ENCODE measurements at regions of chr18 and their contacts with region 1.

Region 1: DNA sequence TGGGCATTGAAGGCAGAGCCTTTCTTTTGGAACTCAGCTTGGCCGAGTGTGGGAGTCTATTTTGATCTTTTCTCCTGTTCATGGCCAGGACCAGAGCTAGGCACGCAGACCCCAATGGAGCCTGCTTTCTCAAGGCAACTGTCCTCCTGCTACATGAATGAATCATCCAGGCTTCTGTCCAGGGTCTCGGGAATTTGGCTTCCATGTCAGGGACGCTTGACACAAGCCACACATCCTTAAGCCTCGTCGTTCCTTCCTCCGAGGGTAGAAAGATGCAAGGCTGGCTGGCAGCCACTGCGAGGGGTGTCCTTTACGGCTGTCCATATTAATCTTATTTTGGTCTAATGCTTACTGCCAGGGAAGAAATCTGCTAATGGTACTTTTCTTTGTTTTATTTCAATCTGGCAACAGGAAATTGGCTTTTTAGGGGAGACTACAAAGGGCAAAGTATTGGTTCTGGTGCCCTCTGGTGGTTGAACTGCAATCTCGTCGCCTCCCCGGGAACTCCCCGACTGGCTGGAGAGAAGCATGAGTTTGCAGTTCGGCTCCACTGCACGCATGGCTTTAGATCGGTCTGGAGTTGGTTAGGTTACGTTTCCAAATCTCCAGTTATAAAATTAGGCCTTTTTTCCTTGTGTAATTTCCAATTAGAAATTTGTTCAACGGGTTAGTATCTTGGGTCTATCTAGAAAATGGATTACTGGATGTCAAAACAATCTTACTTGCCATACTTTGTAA is 135.2 kb downstream of the ALPK2 start:
- DNase-seq: peak; percentile 89
- H3K4me3 ChIP-seq: peak overlapping the region in 3 of 4 donors; percentile 13 to 29 (median 25)
- H3K27ac ChIP-seq: peak overlapping the region; percentile 31 to 74 (median 70)
- H3K4me1 ChIP-seq: peaks cover 0 to 29% (median 20%) of the 10 kb centered on the region in 4 donors
- H3K27me3 ChIP-seq: no peaks in the 10 kb centered on the region
- CTCF ChIP-seq: peak; percentile 71 to 83 (median 78)
- EP300 ChIP-seq: no peak
- POLR2A ChIP-seq: no peak

Region 2: DNA sequence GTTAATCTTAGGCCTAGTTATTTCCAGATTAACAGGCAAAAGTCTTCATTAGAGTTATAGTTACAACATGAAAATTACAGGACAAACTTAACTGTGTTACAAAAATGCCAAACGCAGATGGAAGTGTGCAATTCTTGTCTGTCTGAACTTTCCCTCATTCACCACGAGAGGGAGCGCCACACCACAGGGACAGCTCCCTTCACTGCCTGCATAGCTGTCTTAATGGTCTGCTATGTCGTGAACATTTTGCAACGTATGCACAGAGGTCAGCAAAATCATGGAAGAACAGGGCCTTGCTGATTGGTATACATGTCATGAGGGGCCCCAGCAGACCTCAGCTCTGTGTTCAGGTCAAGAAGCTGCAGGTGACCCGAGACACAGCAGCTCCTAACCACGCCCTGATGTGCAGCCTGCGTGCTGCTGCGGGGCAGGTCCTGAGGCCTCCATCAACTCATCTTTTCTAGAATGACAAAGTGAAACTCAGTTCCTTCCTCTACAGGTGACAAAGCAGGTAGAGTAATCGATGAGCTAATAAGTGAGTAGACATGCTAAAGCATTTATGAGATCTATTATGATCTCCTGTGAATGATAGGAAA is 611.8 kb before region 1 on chr18:
- intact Hi-C with region 1: loop called (anchors 5 kb)
- DNase-seq: peak; percentile 83
- H3K4me3 ChIP-seq: no peak overlapping the region
- H3K27ac ChIP-seq: no peak overlapping the region
- H3K4me1 ChIP-seq: no peaks in the 10 kb centered on the region
- H3K27me3 ChIP-seq: no peaks in the 10 kb centered on the region
- CTCF ChIP-seq: peak; percentile 75 to 88 (median 84)
- EP300 ChIP-seq: no peak
- POLR2A ChIP-seq: no peak

Region 3: DNA sequence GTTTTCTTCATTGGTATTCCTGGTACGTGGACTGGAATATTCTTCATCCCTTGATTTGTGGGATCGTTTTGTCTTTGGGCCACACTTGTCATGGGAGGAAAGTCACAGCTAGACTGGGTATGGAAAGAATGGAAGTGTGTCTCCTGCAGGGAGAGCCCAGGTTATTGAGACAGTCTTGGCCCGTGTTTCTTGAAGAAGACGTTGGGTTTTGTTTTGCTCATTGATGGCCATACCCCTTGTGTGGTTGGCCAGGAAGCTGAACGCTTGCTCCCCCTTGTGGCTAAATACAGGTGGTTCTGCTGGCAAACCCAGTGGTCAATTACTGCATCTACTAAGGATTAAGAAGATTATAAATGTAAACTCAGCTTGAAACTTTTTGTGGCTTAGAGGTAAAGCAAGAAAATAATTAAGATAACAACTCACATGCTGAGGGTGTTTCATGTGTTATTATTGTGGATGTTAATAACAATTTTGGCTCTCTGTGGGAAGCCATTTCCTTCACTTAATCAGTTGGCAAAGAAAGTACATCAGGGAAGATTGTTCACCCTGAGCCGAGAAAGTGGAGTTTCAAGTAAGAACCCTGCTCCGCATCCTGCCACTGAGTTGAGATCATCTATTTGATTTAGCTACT is 357.9 kb before region 1 on chr18:
- intact Hi-C with region 1: loop called (anchors 10 kb)
- DNase-seq: no peak
- H3K4me3 ChIP-seq: no peak overlapping the region
- H3K27ac ChIP-seq: no peak overlapping the region
- H3K4me1 ChIP-seq: peaks cover 0 to 4% (median 0%) of the 10 kb centered on the region in 4 donors
- H3K27me3 ChIP-seq: no peaks in the 10 kb centered on the region
- CTCF ChIP-seq: peak; percentile 38 to 79 (median 64)
- EP300 ChIP-seq: no peak
- POLR2A ChIP-seq: no peak

Region 4: DNA sequence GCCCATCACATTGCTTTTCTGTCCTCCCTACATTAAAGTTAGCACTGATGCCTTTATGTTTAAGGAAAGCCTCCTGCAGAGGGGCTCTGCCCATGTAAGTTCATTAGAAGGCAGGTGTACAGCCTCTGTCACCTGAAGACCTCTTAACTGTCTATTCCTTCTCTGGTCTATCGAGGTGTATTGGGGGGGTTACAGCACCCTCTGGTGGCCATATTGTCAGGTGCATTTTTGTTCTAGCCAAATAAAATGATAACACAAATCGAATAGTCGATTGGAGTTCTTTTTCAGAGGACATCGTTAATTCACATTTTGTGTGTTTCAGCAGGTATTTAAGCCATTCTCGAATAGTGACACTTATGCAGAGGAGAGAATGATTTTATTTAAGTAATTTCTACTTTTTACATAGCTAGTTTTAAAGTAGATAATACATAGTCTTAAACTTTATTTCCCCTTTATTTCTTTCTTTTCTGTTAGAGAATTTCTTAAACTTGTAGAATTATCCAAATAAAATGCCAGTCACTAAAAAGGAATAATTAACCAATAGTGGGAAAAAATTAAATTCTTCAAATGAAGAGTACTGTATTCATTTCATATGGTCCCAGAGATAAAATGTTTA is 312.8 kb before region 1 on chr18:
- intact Hi-C with region 1: loop called (anchors 5 kb)
- DNase-seq: no peak
- H3K4me3 ChIP-seq: no peak overlapping the region
- H3K27ac ChIP-seq: no peak overlapping the region
- H3K4me1 ChIP-seq: peaks cover 0 to 56% (median 39%) of the 10 kb centered on the region in 4 donors
- H3K27me3 ChIP-seq: no peaks in the 10 kb centered on the region
- CTCF ChIP-seq: peak; percentile 65 to 87 (median 76)
- EP300 ChIP-seq: no peak
- POLR2A ChIP-seq: no peak

Region 5: DNA sequence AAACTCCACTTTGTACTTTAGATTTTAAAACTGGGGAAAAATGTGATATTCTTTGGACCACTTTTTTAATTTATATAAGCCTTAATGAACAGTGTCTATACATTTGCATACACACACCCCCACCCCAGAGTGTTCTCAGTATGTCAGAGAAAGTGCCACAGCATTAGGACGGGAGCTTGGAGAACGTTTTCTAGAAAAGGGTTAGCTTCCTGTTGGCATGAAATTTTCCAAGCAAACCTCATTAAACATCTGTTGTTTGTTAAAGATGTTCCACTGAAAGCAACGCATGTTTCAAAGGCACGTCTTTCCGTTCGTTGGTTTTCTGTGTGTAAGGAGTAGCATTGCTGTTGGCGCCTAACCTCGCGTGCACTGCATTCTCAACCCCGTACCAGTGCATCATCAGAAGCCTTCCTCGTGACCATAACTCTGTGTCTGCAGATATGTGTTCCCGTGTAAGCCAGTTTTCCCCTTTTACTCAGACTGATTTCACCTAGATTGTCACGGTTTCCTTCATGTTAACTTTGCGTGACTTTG is 93.3 kb before region 1 on chr18:
- intact Hi-C with region 1: loop called (anchors 1 kb)
- DNase-seq: no peak
- H3K4me3 ChIP-seq: no peak overlapping the region
- H3K27ac ChIP-seq: peak overlapping the region in 1 of 4 donors; percentile 17
- H3K4me1 ChIP-seq: peaks cover 0 to 37% (median 17%) of the 10 kb centered on the region in 4 donors
- H3K27me3 ChIP-seq: no peaks in the 10 kb centered on the region
- CTCF ChIP-seq: no peak
- EP300 ChIP-seq: peak in 1 of 4 donors; percentile 14
- POLR2A ChIP-seq: no peak

Region 6: GRCh38 chr18:58447402-58448095 is 46.1 kb before region 1 on chr18:
- intact Hi-C with region 1: loop called (anchors 5 kb)
- DNase-seq: peak; percentile 70
- H3K4me3 ChIP-seq: no peak overlapping the region
- H3K27ac ChIP-seq: peak overlapping the region in 3 of 4 donors; percentile 63 to 72 (median 68)
- H3K4me1 ChIP-seq: peaks cover 0 to 27% (median 21%) of the 10 kb centered on the region in 4 donors
- H3K27me3 ChIP-seq: no peaks in the 10 kb centered on the region
- CTCF ChIP-seq: no peak
- EP300 ChIP-seq: no peak
- POLR2A ChIP-seq: no peak

Measured in sigmoid colon (tissue), 7 donors.